GM13977 (cell line): ENCODE measurements at regions of chr1 and their contacts with region 1.

Region 1: DNA sequence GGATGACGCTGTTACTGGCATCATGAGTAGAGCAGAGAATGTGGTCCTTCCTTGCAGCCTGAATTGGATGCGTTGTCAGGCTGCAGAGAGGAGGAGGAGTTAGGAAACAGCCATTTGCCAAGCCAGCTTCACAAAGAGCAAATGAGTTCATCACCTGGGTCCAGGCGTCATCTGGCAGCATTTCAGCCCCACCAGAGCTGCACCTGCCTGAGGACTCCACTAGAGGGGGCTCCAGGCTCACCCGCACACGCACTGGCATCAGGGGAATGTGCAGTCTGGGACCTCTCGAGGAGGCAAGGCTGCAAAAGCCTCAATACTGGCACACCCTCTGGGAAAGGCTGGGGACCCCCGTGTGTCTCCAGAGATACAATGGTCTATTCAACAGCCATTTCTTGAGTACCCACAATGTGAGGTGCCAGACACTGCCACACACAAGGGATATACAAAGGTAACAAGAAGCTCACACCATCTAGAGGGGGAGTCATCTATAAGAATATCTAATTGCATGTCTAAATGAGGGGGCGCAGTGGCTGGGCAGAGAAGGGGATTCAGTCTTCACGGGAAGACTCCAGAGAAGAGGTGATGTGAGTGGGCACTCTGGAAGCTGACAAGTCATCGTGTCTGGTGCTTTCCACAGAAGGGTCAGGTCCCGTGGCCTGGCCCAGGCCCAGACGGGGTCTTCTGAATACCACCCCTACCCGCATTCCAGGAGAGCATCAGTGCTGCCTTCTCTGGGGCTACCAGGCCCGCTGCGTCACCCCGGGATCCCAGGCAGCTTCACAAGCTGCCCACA is 53.5 kb upstream of the CNTN2 start:
- DNase-seq: peak; percentile 90
- CTCF ChIP-seq: peak; percentile 97

Region 2: GRCh38 chr1:205061665-205062069 is 72.2 kb after region 1 on chr1:
- in situ Hi-C with region 1: loop called (anchors 10 kb)
- DNase-seq: peak; percentile 89
- CTCF ChIP-seq: peak; percentile 93

Region 3: GRCh38 chr1:205141236-205142101 is 152.0 kb after region 1 on chr1:
- in situ Hi-C with region 1: loop called (anchors 25 kb)
- DNase-seq: peak; percentile 69
- CTCF ChIP-seq: peak; percentile 70

Region 4: GRCh38 chr1:205273551-205273982 is 284.1 kb after region 1 on chr1:
- in situ Hi-C with region 1: loop called (anchors 25 kb)
- DNase-seq: peak; percentile 93
- CTCF ChIP-seq: peak; percentile 95